PC-9 (cell line): ENCODE measurements at regions of chr15 and their contacts with region 1.

Region 1: DNA sequence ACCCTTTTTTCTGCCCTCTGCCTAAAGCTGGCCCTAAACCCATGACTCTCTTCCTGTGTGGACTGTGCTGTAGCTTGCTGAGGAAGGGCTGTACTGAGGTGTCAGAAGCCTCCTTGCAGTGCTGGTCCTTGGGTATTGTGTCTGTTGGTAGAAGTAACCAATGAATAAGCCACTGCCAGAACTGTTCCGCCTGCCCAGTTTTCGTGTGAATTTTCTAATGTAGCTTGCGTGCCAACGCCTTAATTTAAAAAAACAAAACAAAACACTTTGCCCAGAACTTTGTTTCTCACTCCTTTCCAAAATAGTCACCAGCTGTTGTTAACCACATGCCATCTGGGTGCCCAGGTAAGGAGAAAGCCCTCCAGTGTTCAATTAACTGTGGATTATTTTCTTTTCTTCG is 101.9 kb downstream of the KLHL25 start:
- DNase-seq: no peak
- H3K4me3 ChIP-seq: no peak overlapping the region
- H3K27ac ChIP-seq: no peak overlapping the region
- H3K4me1 ChIP-seq: no peaks in the 10 kb centered on the region
- H3K27me3 ChIP-seq: no peaks in the 10 kb centered on the region
- CTCF ChIP-seq: no peak

Region 2: GRCh38 chr15:85592148-85592547 is 100.7 kb before region 1 on chr15:
- CTCF ChIA-PET with region 1: interaction called, 18 read pairs
- POLR2A ChIA-PET with region 1: no interaction called
- intact Hi-C with region 1: no loop called
- DNase-seq: peak; percentile 54 to 95
- H3K4me3 ChIP-seq: no peak overlapping the region
- H3K27ac ChIP-seq: peak overlapping the region; percentile 84
- H3K4me1 ChIP-seq: peaks cover 52% of the 10 kb centered on the region
- H3K27me3 ChIP-seq: no peaks in the 10 kb centered on the region
- CTCF ChIP-seq: peak; percentile 56